A673 (cell line): ENCODE measurements at regions of chr2 and their contacts with region 1.

Region 1: GRCh38 chr2:27370026-27370815 is at the starts of genes EIF2B4 and SNX17:
- DNase-seq: peak; percentile 100
- H3K4me3 ChIP-seq: peak within 1 kb of the TSS; percentile 95
- H3K27ac ChIP-seq: peak within 1 kb of the TSS; percentile 94
- H3K4me1 ChIP-seq: peaks cover 17% of the 10 kb centered on the region
- H3K27me3 ChIP-seq: no peaks in the 10 kb centered on the region
- CTCF ChIP-seq: peak; percentile 93
- total RNA-seq, gene EIF2B4: 68.8 and 74.7 TPM in 2 replicates
- total RNA-seq, gene SNX17: 109 and 110 TPM in 2 replicates

Region 2: DNA sequence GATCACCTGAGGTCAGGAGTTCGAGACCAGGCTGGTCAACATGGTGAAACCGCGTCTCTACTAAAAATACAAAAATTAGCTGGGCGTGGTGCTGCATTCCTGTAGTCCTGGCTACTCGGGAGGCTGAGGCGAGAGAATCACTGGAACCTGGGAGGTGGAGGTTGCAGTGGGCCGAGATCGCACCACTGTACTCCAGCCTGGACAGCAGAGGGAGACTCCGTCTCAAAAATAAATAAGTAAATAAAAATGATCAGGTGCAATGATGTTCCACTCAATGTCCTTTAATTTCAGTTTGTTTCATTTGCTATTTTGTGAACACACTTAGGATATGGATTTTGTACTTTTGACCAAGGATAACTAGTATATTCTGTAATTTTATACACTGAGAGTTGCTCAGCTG is 1135.1 kb before region 1 on chr2:
- CTCF ChIA-PET with region 1: no interaction called
- POLR2A ChIA-PET with region 1: no interaction called
- intact Hi-C with region 1: no loop called
- DNase-seq: no peak
- H3K4me3 ChIP-seq: no peak overlapping the region
- H3K27ac ChIP-seq: no peak overlapping the region
- H3K4me1 ChIP-seq: no peaks in the 10 kb centered on the region
- H3K27me3 ChIP-seq: no peaks in the 10 kb centered on the region
- CTCF ChIP-seq: 0 out of 2 replicates have a peak, but pooled peaks have one; percentile 19

Region 3: DNA sequence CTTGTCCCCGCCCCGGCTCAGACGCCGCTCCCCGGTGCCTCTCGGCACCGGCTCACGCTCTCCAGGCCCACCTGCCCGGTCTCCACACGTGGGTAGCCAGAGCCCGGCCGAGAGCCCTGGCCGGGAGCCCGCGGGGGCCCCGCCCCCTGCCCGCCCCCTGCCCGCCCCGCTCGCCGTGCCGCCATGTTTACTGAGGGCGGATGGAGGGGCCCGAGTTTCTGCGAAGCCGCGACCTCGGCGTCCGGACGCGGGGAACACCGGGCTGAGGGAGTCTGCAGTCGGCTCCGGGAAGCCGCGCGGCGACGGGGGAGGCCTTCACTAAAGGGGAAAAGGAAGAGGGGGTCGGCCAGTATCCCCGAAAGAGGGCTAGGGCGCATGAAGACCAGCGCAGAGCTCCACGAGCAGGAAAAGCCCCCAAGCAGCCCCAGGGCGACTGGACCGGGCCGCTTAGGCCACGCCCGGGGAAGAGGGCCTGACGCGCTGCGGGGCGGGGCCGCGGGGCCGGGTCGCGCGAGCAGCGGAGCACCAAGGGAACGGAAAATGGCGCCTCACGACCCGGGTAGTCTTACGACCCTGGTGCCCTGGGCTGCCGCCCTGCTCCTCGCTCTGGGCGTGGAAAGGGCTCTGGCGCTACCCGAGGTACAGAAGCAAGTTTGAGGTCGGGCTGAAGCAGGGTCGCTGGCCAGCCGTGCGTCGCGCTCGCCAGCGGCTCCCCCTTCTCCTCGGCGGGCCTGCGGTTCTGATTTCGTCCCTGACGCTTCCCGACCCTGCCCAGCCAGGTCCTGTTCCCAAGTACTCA is 158.2 kb before region 1 on chr2 and contains the starts of genes ATRAID and SLC5A6:
- CTCF ChIA-PET with region 1: no interaction called
- POLR2A ChIA-PET with region 1: no interaction called
- intact Hi-C with region 1: loop called (anchors 1 kb)
- DNase-seq: peak; percentile 95
- H3K4me3 ChIP-seq: peak within 1 kb of the TSS; percentile 72
- H3K27ac ChIP-seq: peak within 1 kb of the TSS; percentile 98
- H3K4me1 ChIP-seq: peaks cover 57% of the 10 kb centered on the region
- H3K27me3 ChIP-seq: no peaks in the 10 kb centered on the region
- CTCF ChIP-seq: no peak
- total RNA-seq, gene ATRAID: 106 and 107 TPM in 2 replicates
- total RNA-seq, gene SLC5A6: 366 and 515 TPM in 2 replicates

Region 4: DNA sequence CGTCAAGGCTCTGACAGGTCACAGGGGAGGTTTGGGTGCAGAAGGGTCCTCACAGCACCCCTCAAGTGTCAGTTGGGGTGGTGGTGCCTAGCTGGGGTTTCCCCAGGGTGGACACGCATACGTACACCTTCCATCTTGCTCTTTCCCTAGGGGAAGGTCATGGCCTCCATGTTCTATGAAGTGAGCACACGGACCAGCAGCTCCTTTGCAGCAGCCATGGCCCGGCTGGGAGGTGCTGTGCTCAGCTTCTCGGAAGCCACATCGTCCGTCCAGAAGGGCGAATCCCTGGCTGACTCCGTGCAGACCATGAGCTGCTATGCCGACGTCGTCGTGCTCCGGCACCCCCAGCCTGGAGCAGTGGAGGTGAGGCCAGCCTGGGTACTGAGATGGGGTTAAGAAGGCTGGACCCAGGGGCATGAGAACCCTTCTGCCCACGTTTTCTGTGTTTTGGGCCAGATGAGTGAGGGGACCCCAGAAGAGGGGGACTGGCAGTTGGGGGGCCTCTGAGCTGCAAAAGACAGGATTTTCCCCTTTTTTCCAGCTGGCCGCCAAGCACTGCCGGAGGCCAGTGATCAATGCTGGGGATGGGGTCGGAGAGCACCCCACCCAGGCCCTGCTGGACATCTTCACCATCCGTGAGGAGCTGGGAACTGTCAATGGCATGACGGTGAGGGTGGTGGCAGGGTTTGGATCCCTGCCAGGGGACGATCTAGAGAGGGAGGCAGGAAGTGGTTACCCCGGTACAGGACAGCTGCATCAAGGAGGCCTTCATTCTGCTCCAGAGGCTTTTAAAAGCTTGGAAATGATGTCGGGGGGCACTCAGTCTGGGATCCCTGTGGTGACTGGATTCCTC is 128.2 kb before region 1 on chr2:
- CTCF ChIA-PET with region 1: no interaction called
- POLR2A ChIA-PET with region 1: no interaction called
- intact Hi-C with region 1: no loop called
- DNase-seq: no peak
- H3K4me3 ChIP-seq: no peak overlapping the region
- H3K27ac ChIP-seq: no peak overlapping the region
- H3K4me1 ChIP-seq: no peaks in the 10 kb centered on the region
- H3K27me3 ChIP-seq: no peaks in the 10 kb centered on the region
- CTCF ChIP-seq: no peak

Region 5: DNA sequence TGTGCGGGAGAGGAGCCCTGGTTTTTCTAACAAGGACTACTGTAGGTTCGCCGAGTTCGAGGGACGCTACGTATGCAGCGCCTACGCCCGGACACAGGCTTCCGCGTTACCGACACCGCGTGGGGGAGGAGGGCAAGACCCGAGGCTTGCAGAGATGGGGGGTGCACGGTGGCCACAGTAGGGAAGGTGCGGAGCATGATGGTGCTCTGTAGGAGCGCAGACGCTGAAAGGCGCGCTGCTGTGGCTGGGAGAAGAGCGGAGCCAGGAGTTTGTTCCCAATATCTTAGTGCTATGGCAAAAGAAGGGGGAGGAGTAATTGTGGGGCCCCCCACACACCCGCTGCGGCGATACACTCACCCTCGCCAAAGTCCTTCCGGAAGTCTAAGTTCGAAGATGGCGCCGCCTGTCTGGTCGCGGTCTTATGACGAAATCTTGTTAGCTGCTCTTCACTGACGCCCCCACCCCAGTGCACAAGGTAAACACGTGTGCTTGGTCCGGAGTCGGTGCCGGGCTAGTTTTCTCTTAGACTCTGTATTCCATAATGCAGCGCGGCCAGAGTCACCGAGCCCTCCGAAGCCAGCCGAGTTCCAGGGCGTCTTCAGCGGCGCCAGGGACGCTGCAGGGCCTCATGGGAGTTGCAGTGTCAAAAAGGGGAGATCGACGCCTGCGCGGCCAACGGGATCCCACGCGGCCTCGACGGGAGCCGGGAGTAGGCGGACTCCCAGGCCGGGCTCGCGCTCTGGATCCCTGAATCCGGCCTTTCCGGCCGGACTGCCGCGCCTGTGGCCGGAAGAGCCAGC is 13.6 kb before region 1 on chr2 and contains the start of gene GTF3C2:
- CTCF ChIA-PET with region 1: interaction called, 4 read pairs
- POLR2A ChIA-PET with region 1: interaction called, 12 read pairs
- intact Hi-C with region 1: loop called (anchors 1 kb)
- DNase-seq: peak; percentile 99
- H3K4me3 ChIP-seq: peak within 1 kb of the TSS; percentile 77
- H3K27ac ChIP-seq: peak within 1 kb of the TSS; percentile 88
- H3K4me1 ChIP-seq: peaks cover 3% of the 10 kb centered on the region
- H3K27me3 ChIP-seq: no peaks in the 10 kb centered on the region
- CTCF ChIP-seq: no peak
- total RNA-seq, gene GTF3C2: 85.7 and 89.3 TPM in 2 replicates